Pancreas (tissue), 10 donors: ENCODE measurements at regions of chr20 and their contacts with region 1.

Region 1: DNA sequence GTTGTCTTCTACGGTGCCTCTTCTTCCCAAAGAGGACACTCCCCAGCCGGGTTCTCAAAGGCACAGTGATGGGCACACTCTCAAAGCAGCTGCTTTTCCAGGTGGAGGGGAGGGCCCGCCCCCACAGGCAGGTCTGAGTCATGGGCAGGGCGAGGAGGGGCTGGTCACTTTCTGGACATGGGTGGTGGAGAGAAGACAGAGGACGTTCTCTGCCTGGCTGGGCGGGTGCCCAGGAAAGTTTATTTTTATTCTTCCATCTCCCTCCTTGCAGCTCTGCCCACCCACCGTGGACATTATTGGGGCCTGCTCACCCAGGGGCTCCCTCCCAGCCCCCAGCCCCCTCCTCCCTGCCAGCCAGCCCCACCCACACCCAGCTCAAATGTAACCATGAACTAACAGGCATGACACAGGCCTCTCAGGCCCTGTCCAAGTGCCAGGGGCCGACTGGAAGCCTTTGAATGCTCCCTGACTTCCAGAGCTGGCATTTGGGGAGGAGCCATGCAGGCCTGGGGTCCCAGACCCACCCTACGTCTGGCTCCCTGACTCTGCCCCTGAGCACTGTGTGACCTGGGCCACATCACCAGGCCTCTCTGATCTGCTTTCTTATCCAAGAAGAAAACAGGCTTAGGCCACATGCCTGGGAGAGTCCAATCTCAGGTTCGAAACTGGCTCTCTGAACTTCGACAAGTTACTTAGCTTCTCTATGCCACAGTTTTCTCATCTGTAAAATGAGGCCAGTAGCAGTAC is 8.0 kb downstream of the TGM2 start:
- DNase-seq: no peak
- ATAC-seq: no peak
- H3K4me3 ChIP-seq: no peak overlapping the region
- H3K27ac ChIP-seq: no peak overlapping the region
- H3K4me1 ChIP-seq: peaks cover 4 to 11% (median 5%) of the 10 kb centered on the region in 3 donors
- H3K27me3 ChIP-seq: no peaks in the 10 kb centered on the region
- CTCF ChIP-seq: no peak

Region 2: GRCh38 chr20:38065764-38066375 is 91.2 kb before region 1 on chr20:
- intact Hi-C with region 1: loop called in 1 of 3 experiments (anchors 5 kb)
- DNase-seq: no peak
- ATAC-seq: no peak
- H3K4me3 ChIP-seq: no peak overlapping the region
- H3K27ac ChIP-seq: no peak overlapping the region
- H3K4me1 ChIP-seq: no peaks in the 10 kb centered on the region
- H3K27me3 ChIP-seq: no peaks in the 10 kb centered on the region
- CTCF ChIP-seq: no peak

Region 3: DNA sequence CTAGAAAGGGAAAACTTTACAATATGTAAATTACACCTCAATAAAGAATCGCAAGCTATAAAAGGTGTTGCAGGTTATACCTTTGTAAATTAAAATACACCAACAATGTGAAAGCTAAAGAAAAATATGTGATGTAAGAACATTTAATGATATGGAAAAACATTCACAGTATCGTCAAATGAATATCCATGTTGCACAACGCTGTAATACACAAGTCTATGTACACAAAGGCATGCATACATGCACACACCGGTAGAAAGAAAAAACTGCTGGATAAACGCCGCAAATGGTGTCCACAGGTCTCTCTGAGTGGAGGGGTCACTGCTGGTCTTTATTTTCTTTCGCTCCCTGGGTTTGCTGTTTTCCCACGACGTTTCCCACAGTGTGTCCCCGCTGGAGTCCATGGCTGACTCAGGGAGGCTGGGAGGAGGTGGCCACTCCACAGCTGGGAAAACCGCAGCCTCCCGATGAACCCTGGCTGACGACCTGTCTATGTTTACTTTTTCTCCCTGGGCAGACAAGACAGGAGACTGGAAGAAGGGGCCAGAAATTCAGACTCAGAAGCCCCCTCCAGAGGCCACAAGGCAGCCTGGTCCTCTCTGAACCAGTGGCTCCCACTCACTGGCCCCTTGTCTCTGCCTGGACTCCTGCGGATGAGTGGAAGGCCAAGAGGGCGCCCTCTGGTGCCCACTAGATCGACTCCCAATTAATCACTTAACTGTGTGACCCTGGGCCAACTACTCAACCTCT is 133.9 kb after region 1 on chr20:
- intact Hi-C with region 1: no loop called
- DNase-seq: no peak
- ATAC-seq: peak in 1 of 4 donors; percentile 41
- H3K4me3 ChIP-seq: no peak overlapping the region
- H3K27ac ChIP-seq: no peak overlapping the region
- H3K4me1 ChIP-seq: no peaks in the 10 kb centered on the region
- H3K27me3 ChIP-seq: no peaks in the 10 kb centered on the region
- CTCF ChIP-seq: no peak